GM18951 (cell line): ENCODE measurements at regions of chr7 and their contacts with region 1.

Region 1: GRCh38 chr7:19754521-19755116 is 18.8 kb downstream of the TMEM196 start:
- POLR2A ChIP-seq: no peak

Region 2: DNA sequence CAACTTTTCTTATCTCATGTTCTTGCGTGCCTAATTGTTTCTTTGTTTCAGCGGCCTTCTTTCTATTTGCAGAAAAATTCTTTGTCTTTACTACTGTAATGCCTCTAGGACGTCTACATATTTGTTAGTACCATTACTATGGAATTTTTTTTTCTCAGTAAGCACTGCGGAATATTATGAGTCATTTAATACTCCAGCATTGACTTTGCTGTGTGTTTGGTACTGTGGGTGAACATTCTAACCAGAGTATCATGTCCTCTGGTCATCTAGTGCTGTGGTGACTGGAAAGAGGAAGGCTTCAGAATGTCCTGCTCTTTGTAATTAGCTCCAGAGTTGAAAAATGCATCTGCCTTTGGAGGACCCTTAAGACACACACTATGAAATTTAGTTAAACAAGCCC is 550.9 kb before region 1 on chr7:
- in situ Hi-C with region 1: no loop called
- POLR2A ChIP-seq: no peak

Region 3: GRCh38 chr7:19537942-19538401 is 216.6 kb before region 1 on chr7:
- in situ Hi-C with region 1: no loop called
- POLR2A ChIP-seq: no peak

Region 4: GRCh38 chr7:19982841-19983835 is 228.5 kb after region 1 on chr7:
- in situ Hi-C with region 1: no loop called
- POLR2A ChIP-seq: no peak

Region 5: DNA sequence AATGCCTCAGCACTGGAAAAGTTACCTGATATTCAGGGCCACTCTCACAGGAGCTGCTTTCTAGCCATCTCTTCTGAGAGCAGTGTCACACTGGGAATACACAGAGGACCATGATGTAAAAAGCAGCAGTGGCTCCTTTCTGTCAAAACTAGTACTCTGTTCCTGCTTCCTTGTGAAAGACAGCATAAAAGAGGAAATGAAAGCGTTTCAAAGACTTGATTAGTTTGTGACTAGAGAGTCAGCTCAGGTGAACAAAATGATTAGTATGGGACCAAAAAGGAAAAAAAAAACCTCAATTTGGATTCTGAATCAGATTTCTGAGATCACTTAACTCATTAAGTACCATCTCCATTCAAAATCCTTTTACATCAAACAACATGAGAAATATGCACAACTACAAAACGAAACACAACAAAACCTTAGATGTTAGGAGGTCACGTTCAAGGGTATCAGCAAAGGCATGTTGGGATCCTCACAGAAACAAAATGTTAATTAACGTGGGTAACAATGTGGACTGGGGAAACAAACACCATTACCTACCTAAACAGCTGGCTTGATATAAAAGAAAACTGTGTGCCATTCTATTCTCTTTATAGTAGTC is 358.9 kb after region 1 on chr7:
- in situ Hi-C with region 1: no loop called
- POLR2A ChIP-seq: no peak

Region 6: DNA sequence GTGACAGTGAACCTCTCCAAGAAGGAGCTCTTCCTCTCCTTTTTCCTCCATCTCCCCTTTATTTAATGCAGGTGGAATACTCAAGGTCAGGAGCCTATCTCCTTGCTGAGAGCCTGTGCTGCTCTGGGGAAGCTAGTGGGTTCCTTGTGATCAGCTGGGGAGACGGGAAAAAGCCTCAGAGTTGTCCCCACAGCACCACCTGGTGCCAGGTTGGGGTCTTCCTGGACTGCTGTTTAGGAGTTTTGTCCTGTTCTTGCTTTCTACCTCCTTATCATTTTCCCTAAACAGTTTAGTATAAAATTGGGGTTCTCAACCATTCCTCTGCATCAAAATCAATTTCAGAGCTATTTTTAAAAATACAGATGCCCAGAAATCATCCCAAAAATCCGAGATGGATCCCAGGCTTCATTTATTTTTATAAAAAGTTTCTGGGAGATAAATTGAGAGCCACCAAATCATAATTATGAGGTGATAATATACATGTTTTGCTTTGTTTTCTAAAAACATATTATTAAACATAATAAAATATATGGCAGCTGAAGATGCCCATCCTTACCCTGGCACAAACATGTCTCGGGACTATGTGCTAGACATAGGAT is 418.2 kb after region 1 on chr7:
- in situ Hi-C with region 1: loop called (anchors 25 kb)
- POLR2A ChIP-seq: no peak